H1 (cell line): ENCODE measurements at regions of chr10 and their contacts with region 1.

Region 1: GRCh38 chr10:117198088-117198487 is 799 bp downstream of the KCNK18 start:
- DNase-seq: no peak
- H3K4me3 ChIP-seq: no peak overlapping the region
- H3K27ac ChIP-seq: no peak overlapping the region
- H3K4me1 ChIP-seq: no peaks in the 10 kb centered on the region; a peak in 2 of 7 replicates
- H3K27me3 ChIP-seq: no peaks in the 10 kb centered on the region
- CTCF ChIP-seq: no peak
- EP300 ChIP-seq: no peak
- POLR2A ChIP-seq: no peak
- RAD21 ChIP-seq: no peak

Region 2: DNA sequence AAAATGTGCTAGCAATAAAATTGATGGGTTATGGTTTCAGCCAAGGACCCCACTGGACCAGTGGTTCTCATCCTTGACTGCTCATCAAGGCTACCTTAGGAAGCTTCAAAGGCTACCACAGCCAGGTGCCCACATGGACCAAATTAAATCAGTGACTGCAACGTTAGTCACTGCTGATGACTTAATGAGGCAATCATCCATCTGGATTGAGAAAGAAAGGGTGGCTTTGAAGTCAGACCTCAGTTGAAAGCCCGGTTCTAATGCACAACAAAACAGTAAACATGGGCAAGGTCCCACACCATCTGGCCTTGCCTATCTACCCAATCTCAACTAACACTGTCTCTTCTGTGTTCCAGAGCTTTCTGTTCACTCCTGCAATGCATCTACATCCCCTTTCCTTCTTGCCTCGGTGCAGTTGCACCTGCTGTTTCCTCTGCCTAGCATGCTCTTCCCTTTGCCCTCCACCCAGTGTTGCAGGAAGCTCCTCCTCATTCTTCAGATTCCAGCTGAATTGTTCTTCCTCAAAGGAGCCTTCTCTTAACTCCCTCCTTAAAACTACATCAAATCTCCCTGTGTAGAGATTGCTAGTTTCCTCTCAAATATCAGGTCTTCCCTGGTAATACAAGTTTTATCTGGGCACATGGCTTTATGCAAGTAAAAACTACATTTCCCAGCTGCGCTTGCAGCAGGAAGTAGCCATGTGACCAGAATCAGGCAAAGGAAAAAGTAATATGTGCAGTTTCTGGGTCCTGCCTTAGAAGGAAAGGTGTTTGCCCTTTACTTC is 11.1 kb before region 1 on chr10:
- CTCF ChIA-PET with region 1: interaction called, 13 read pairs
- POLR2A ChIA-PET with region 1: no interaction called
- DNase-seq: no peak
- H3K4me3 ChIP-seq: no peak overlapping the region
- H3K27ac ChIP-seq: no peak overlapping the region
- H3K4me1 ChIP-seq: no peaks in the 10 kb centered on the region
- H3K27me3 ChIP-seq: no peaks in the 10 kb centered on the region; a peak in 1 of 7 replicates
- CTCF ChIP-seq: no peak
- EP300 ChIP-seq: no peak
- POLR2A ChIP-seq: no peak
- RAD21 ChIP-seq: no peak